Calu3 (cell line): ENCODE measurements at regions of chr1 and their contacts with region 1.

Region 1: GRCh38 chr1:244272471-244273261 is 179.0 kb downstream of the ADSS2 start:
- DNase-seq: peak; percentile 79
- H3K4me3 Mint-ChIP-seq: no peak overlapping the region
- H3K27ac Mint-ChIP-seq: peak overlapping the region; percentile 50
- H3K4me1 Mint-ChIP-seq: peaks cover 41% of the 10 kb centered on the region
- H3K27me3 Mint-ChIP-seq: no peaks in the 10 kb centered on the region
- CTCF ChIP-seq: peak; percentile 97

Region 2: GRCh38 chr1:242454262-242455045 is 1818.2 kb before region 1 on chr1:
- CTCF ChIA-PET with region 1: no interaction called
- intact Hi-C with region 1: loop called (anchors 10 kb)
- DNase-seq: peak; percentile 32
- H3K4me3 Mint-ChIP-seq: no peak overlapping the region
- H3K27ac Mint-ChIP-seq: no peak overlapping the region
- H3K4me1 Mint-ChIP-seq: no peaks in the 10 kb centered on the region
- H3K27me3 Mint-ChIP-seq: peaks cover 21% of the 10 kb centered on the region
- CTCF ChIP-seq: peak; percentile 65

Region 3: DNA sequence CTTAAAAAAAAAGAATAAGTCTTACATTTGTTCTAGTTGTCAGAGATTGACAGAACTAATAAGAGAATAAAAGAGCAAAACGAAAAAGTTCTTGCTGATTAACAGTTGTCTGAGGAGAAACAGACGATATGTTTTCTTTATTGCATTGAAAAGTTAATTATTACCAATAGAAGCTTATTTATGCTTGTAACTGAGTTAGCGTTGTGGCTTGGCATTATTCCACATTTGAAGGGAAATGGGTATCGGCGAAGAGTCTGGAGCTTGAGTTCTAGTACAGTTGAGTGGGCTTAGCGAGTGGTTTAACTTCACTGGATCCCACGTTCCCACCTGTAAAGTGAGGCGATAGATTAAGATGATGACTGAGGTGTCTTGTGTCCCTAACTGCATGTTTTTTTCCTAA is 907.8 kb before region 1 on chr1:
- CTCF ChIA-PET with region 1: no interaction called
- intact Hi-C with region 1: loop called (anchors 5 kb)
- DNase-seq: peak; percentile 41
- H3K4me3 Mint-ChIP-seq: peak overlapping the region; percentile 27
- H3K27ac Mint-ChIP-seq: peak overlapping the region; percentile 17
- H3K4me1 Mint-ChIP-seq: peaks cover 20% of the 10 kb centered on the region
- H3K27me3 Mint-ChIP-seq: no peaks in the 10 kb centered on the region
- CTCF ChIP-seq: no peak

Region 4: GRCh38 chr1:243748706-243749283 is 523.9 kb before region 1 on chr1:
- CTCF ChIA-PET with region 1: no interaction called
- intact Hi-C with region 1: loop called (anchors 10 kb)
- DNase-seq: peak; percentile 45
- H3K4me3 Mint-ChIP-seq: no peak overlapping the region
- H3K27ac Mint-ChIP-seq: no peak overlapping the region
- H3K4me1 Mint-ChIP-seq: no peaks in the 10 kb centered on the region
- H3K27me3 Mint-ChIP-seq: no peaks in the 10 kb centered on the region
- CTCF ChIP-seq: peak; percentile 67

Region 5: GRCh38 chr1:243926803-243927279 is 345.8 kb before region 1 on chr1:
- CTCF ChIA-PET with region 1: no interaction called
- intact Hi-C with region 1: loop called (anchors 1 kb)
- DNase-seq: peak; percentile 36
- H3K4me3 Mint-ChIP-seq: no peak overlapping the region
- H3K27ac Mint-ChIP-seq: no peak overlapping the region
- H3K4me1 Mint-ChIP-seq: peaks cover 41% of the 10 kb centered on the region
- H3K27me3 Mint-ChIP-seq: no peaks in the 10 kb centered on the region
- CTCF ChIP-seq: no peak

Region 6: DNA sequence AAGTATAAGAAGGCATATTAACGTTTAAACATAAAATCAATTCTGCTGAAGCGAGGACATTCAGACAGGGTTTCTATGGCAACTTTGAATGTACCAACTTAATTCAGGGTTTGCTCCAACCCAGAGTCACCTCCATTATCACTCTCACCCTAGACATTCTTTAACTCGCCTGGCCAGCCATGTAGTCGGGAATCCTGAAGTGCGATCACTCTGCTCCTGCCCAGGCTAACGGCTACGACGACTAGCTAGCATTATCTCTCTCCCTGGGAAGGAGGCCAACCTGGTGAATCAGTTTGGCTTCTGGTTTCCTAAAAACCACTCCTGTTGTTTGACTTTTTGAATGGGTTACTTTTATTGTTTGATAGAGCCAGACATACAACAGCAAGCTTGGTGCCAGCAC is 260.5 kb before region 1 on chr1:
- CTCF ChIA-PET with region 1: no interaction called
- intact Hi-C with region 1: loop called (anchors 2 kb)
- DNase-seq: peak; percentile 7
- H3K4me3 Mint-ChIP-seq: no peak overlapping the region
- H3K27ac Mint-ChIP-seq: no peak overlapping the region
- H3K4me1 Mint-ChIP-seq: peaks cover 8% of the 10 kb centered on the region
- H3K27me3 Mint-ChIP-seq: no peaks in the 10 kb centered on the region
- CTCF ChIP-seq: no peak

Region 7: GRCh38 chr1:244163861-244164562 is 108.7 kb before region 1 on chr1:
- CTCF ChIA-PET with region 1: no interaction called
- intact Hi-C with region 1: loop called (anchors 5 kb)
- DNase-seq: peak; percentile 67
- H3K4me3 Mint-ChIP-seq: no peak overlapping the region
- H3K27ac Mint-ChIP-seq: no peak overlapping the region
- H3K4me1 Mint-ChIP-seq: peaks cover 21% of the 10 kb centered on the region
- H3K27me3 Mint-ChIP-seq: no peaks in the 10 kb centered on the region
- CTCF ChIP-seq: no peak

Region 8: DNA sequence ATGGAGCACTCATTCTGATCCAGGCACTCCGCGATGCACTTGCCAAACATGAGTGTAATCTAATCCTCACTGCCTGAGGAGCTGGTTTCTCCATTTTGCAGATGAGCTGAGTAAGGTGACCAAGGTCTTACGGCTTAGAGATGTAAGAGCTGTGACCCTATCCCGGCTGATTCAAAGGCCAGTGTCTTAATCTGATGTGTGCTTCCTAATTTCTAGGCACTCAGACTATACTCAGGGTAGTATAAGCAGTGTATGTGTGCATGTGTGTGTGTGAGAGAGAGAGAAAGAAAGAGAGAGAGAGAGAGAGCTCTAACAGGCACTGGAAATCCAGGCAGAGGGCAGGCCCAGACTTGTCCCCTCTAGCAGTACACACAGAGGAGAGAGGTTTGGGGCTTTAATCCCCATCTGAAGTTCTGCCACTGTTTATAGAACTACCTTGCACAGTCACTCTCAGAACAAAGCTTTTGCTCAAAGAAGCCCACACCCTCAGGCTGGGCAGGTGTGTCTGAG is 33.4 kb before region 1 on chr1:
- CTCF ChIA-PET with region 1: no interaction called
- intact Hi-C with region 1: no loop called
- DNase-seq: no peak
- H3K4me3 Mint-ChIP-seq: no peak overlapping the region
- H3K27ac Mint-ChIP-seq: no peak overlapping the region
- H3K4me1 Mint-ChIP-seq: peaks cover 18% of the 10 kb centered on the region
- H3K27me3 Mint-ChIP-seq: no peaks in the 10 kb centered on the region
- CTCF ChIP-seq: no peak